H1 (cell line): ENCODE measurements at regions of chr5 and their contacts with region 1.

Region 1: DNA sequence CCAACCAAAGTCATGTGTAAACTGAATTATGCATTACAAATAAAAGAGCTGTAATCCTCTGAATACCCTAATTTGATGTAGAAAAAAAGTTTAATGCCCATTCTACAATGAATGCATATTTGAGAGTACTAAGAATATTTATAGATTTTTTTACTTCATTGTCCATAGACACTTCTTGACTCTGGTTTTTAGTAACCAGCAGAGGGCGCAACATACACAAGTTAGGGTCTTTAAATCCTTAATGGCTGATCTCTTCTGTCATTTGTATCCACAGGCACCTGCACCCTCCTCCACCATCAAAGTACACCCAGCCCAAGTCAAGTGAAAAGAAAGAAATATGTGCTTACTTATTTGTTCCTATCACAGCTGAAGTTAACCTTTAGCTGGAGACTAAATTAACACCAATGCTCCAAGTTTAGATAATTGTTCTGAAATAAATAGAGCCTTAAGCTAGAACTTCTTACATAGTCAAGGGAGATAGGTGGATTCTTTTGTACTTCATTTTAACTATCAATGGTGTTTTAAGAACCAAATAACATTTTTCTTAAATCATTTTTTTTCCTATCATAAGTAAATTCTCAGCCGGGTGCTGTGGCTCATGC is 524.2 kb upstream of the DAB2 start:
- DNase-seq: peak in 1 of 2 experiments; percentile 2
- H3K4me3 ChIP-seq: no peak overlapping the region
- H3K27ac ChIP-seq: no peak overlapping the region
- H3K4me1 ChIP-seq: no peaks in the 10 kb centered on the region
- H3K27me3 ChIP-seq: no peaks in the 10 kb centered on the region
- CTCF ChIP-seq: peak in 2 of 3 experiments; percentile 40 to 45; a peak in 2 of 4 replicates
- EP300 ChIP-seq: no peak
- POLR2A ChIP-seq: no peak
- RAD21 ChIP-seq: peak; percentile 81 to 85

Region 2: DNA sequence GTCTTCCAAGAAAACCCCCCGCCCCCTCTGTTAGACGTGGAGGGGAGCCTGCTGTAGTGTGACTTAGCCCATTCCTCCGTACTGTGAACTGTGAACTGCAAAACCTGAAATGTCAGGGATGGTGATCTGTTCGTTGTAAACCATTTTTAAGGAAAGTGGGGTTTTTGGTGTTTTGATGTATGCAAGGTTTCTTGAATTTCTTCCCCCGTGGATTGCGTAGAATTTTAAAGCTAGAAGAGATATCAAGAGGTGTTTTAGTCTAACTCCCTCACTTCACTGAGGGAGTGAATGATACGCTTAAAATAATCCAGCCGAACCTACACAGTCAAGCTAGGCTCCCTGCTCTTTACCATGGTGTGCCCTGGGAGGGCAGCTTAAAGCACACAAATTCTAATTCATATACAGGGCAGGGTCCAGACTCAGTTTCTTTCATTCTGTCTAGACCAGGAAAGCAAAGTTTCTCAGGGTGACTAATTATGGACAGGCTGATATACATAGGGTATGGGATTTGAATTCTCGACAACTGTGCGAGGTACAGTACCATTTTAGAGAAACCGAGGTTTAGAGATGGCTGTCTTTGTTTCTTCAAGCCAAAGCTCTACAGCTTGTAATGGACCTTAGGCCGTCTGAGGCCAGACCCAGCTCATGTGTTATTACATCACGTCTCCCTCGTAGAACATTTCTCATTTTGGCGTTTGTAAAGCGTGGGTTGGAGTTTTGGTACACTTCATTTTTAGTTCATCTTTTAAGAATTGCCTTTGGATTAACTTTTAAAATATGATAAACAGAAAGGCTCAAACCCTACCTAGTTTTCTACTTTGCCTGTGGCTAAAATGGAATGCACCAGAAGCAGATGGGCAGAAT is 733.4 kb after region 1 on chr5:
- CTCF ChIA-PET with region 1: interaction called, 32 read pairs
- POLR2A ChIA-PET with region 1: no interaction called
- DNase-seq: no peak
- H3K4me3 ChIP-seq: peak overlapping the region; percentile 55 to 84 (median 78); a peak in 6 of 8 replicates
- H3K27ac ChIP-seq: no peak overlapping the region
- H3K4me1 ChIP-seq: peaks cover 0 to 18% (median 10%) of the 10 kb centered on the region in 4 experiments; a peak in 6 of 7 replicates
- H3K27me3 ChIP-seq: peaks cover 23 to 38% (median 29%) of the 10 kb centered on the region in 4 experiments
- CTCF ChIP-seq: no peak
- EP300 ChIP-seq: no peak
- POLR2A ChIP-seq: no peak
- RAD21 ChIP-seq: no peak